ENCODE measurements at regions of chr6 and their contacts with region 1.

Region 1: GRCh38 chr6:16206595-16207037 is 31.8 kb upstream of the GMPR start:
- DNase-seq: peak; percentile 42
- H3K4me3 Mint-ChIP-seq: no peak overlapping the region
- H3K27ac Mint-ChIP-seq: no peak overlapping the region
- H3K4me1 Mint-ChIP-seq: peaks cover 2% of the 10 kb centered on the region
- H3K27me3 Mint-ChIP-seq: peaks cover 26% of the 10 kb centered on the region

Region 2: GRCh38 chr6:14584450-14584849 is 1622.2 kb before region 1 on chr6:
- CTCF ChIA-PET with region 1: no interaction called
- POLR2A ChIA-PET with region 1: no interaction called
- DNase-seq: no peak
- H3K4me3 Mint-ChIP-seq: no peak overlapping the region
- H3K27ac Mint-ChIP-seq: no peak overlapping the region
- H3K4me1 Mint-ChIP-seq: no peaks in the 10 kb centered on the region
- H3K27me3 Mint-ChIP-seq: no peaks in the 10 kb centered on the region

Region 3: DNA sequence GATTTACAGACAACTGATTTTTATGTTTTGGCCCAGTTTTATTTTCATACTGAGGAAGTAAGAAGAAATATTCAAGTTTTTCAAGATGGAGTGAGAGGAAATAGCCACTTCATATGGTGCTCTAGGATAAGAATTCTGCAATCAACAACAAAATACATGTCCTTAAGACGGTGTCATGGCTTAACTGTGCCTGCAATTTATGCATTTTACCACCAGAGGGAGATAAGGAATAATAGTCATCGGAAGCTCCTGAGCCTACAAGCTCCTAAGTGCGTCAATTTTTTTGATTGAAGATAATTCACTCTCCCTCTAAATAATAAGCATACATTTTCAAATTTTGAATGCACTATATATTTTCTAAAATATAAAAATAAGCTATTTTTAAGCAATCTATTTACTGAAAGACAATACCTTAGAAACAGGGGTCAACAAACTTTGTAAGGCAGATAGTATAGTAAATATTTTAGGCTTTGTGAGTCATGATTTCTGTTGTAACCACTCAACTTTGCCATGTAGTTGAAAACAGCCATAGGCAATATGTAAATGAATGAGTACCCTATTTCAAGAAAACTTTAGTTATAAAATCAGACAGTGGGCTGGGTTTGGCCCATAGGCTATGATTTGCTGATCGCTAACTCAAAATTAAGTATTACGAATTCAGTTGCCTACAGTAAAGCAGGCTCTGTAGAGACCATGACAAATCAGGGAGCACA is 312.9 kb before region 1 on chr6:
- CTCF ChIA-PET with region 1: interaction called, 10 read pairs
- POLR2A ChIA-PET with region 1: no interaction called
- DNase-seq: no peak
- H3K4me3 Mint-ChIP-seq: no peak overlapping the region
- H3K27ac Mint-ChIP-seq: no peak overlapping the region
- H3K4me1 Mint-ChIP-seq: no peaks in the 10 kb centered on the region
- H3K27me3 Mint-ChIP-seq: no peaks in the 10 kb centered on the region

Measured in activated CD4-positive, alpha-beta memory T cell treated with anti-CD3 and anti-CD28 coated beads, Interleukin-2, amount 10 ng/mL, durations not matched to agents 7 days and 5 days (primary cell).